ENCODE measurements at regions of chr10 and their contacts with region 1.

Region 1: GRCh38 chr10:118720685-118721538 is 33.9 kb downstream of the CACUL1 start:
- DNase-seq: peak; percentile 44
- H3K4me3 ChIP-seq: no peak overlapping the region; a peak in 1 of 4 replicates
- H3K27ac ChIP-seq: no peak overlapping the region
- H3K4me1 ChIP-seq: peaks cover 5 to 13% of the 10 kb centered on the region in 2 experiments; a peak in 3 of 4 replicates
- H3K27me3 ChIP-seq: no peaks in the 10 kb centered on the region
- CTCF ChIP-seq: peak; percentile 95
- EP300 ChIP-seq: no peak
- RAD21 ChIP-seq: peak; percentile 92

Region 2: DNA sequence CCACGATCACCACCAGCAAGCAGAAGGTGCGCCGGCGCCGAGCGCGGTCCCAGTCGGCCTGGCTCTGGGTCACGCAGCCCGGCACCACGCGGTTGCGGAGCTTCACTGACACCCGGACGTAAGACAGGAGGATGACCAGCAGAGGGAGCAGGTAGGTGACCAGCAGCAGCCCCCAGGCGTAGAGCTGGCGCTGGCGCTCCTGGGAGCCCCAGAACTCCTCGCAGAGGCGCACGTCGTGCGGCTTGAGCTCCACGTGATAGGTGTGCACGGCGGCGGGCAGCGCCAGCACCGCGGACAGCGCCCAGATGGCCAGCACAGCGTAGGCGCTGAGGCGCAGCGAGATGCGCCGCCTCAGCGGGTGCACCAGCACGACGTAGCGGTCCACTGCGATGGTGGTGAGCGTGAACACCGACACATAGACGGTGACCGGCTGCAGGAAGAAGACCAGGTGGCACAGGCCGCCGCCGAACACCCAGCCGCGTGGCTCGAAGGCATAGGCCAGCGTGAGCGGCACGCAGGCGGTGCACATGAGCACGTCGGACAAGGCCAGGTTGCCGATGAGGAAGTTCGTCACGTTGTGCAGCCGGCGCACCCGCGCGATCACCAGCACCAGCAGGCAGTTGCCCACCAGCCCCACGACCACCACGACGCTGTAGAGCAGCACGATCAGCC is 126.4 kb before region 1 on chr10:
- CTCF ChIA-PET with region 1: interaction called, 13 read pairs
- POLR2A ChIA-PET with region 1: no interaction called
- DNase-seq: peak; percentile 75
- H3K4me3 ChIP-seq: no peak overlapping the region; a peak in 1 of 4 replicates
- H3K27ac ChIP-seq: no peak overlapping the region
- H3K4me1 ChIP-seq: peaks cover 0 to 19% of the 10 kb centered on the region in 2 experiments; a peak in 2 of 4 replicates
- H3K27me3 ChIP-seq: peaks cover 10% of the 10 kb centered on the region; the same call in 1 of the 2 replicates
- CTCF ChIP-seq: peak; percentile 23; the same call in 1 of the 2 replicates
- EP300 ChIP-seq: no peak
- RAD21 ChIP-seq: no peak; the same call in 1 of the 2 replicates

Region 3: DNA sequence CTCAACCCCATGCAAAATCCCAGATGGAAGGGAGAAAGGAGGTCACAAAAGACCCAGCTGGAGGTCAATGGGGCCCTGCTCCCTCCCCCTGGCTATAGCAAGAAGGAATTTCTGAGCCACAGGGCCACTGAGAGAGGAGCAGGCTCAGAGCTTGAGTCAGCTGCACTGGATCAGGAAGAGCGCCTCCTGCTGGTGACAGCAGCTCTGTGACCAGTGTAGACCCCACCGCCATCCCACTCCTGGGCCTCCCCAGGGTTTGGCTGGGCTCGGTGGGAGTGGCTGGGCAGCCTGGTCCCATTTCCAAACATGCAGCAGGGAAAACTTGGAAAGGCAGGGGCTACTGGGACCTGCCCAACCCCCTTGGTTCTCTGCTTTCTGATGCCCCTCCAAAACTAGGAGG is 94.0 kb before region 1 on chr10:
- CTCF ChIA-PET with region 1: interaction called, 12 read pairs
- POLR2A ChIA-PET with region 1: no interaction called
- DNase-seq: no peak
- H3K4me3 ChIP-seq: no peak overlapping the region; a peak in 1 of 4 replicates
- H3K27ac ChIP-seq: no peak overlapping the region
- H3K4me1 ChIP-seq: peaks cover 4 to 18% of the 10 kb centered on the region in 2 experiments; a peak in 2 of 4 replicates
- H3K27me3 ChIP-seq: no peaks in the 10 kb centered on the region; the same call in 1 of the 2 replicates
- CTCF ChIP-seq: peak; percentile 31; the same call in 1 of the 2 replicates
- EP300 ChIP-seq: no peak
- RAD21 ChIP-seq: no peak

Region 4: GRCh38 chr10:118800920-118801319 is 80.0 kb after region 1 on chr10:
- CTCF ChIA-PET with region 1: interaction called, 10 read pairs
- POLR2A ChIA-PET with region 1: no interaction called
- DNase-seq: peak; percentile 68
- H3K4me3 ChIP-seq: no peak overlapping the region
- H3K27ac ChIP-seq: no peak overlapping the region
- H3K4me1 ChIP-seq: no peaks in the 10 kb centered on the region; a peak in 1 of 4 replicates
- H3K27me3 ChIP-seq: no peaks in the 10 kb centered on the region
- CTCF ChIP-seq: peak; percentile 46
- EP300 ChIP-seq: no peak
- RAD21 ChIP-seq: peak; percentile 88